Endothelial cell of umbilical vein (primary cell): ENCODE measurements at regions of chr6 and their contacts with region 1.

Region 1: DNA sequence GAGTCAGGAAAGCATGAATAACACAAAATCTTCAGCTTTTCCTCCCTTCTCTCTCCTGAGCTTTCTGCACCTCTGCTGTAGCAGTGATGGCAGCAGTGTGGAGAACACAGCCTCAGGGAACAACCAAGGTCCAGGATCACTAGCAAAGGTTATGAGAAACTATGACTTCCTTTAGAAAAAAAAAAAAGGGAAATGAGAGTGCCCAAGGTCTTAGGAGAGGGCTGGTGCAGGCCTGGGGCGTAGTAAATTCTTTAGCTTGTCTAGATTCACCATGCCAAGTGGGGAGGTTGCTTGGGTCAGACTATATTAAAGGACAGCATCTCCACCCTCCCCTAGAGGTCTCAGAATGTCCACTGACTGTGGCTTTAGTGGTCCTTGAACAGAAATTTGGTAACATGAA is 40.4 kb upstream of the POLR1H start:
- DNase-seq: no peak
- H3K4me3 ChIP-seq: no peak overlapping the region
- H3K27ac ChIP-seq: no peak overlapping the region
- H3K4me1 ChIP-seq: no peaks in the 10 kb centered on the region
- H3K27me3 ChIP-seq: no peaks in the 10 kb centered on the region
- CTCF ChIP-seq: no peak
- POLR2A ChIP-seq: no peak

Region 2: DNA sequence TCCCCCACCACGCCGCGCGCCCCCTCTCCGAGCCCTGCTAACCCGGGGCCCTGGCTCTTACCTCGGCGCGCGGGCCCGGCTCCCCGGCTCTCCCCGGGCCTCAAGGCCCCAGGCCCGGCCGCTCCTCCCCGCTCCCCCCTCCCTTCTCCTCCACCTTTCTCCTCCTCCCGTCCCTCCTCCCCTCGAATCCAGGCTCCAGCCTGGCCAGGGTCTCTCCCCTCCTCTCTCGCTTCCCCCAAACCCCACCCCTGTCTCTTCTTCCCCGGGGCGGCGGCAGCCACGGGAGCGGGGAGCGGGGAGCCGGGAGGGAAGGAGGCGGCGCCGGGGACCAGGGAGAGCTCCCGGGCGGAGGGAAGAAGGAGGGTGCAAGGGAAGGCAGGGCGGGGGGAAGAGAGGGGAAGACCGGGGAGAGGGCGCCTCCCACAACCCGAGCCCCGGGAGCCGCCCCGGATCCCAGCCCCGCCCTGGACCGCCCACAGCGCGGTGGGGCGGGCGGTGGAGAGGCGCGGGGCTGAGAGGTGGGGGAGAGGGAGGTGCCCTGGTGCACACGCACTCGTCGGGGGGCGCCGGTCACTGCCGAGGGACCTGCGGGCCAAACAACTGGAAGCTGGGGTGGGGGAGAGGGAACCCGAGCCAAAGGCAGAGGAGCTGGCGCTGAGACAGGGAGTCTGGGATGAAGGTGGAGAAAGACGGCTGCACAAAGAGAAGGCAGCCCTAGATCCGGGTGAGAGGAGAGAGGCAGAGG is 387.7 kb before region 1 on chr6 and contains the start of gene GABBR1:
- CTCF ChIA-PET with region 1: no interaction called
- POLR2A ChIA-PET with region 1: no interaction called
- dilution Hi-C with region 1: no loop called
- intact Hi-C with region 1: no loop called
- DNase-seq: peak; percentile 59
- H3K4me3 ChIP-seq: peak within 1 kb of the TSS; percentile 57 to 73 (median 62)
- H3K27ac ChIP-seq: no peak within 1 kb of the TSS
- H3K4me1 ChIP-seq: peaks cover 28% of the 10 kb centered on the region
- H3K27me3 ChIP-seq: no peaks in the 10 kb centered on the region
- CTCF ChIP-seq: no peak
- POLR2A ChIP-seq: no peak
- total RNA-seq, gene GABBR1: 50.8 and 52.1 TPM in 2 replicates

Region 3: GRCh38 chr6:30169658-30170614 is 149.3 kb after region 1 on chr6:
- CTCF ChIA-PET with region 1: interaction called, 4 read pairs
- POLR2A ChIA-PET with region 1: no interaction called
- dilution Hi-C with region 1: no loop called
- intact Hi-C with region 1: loop called (anchors 10 kb)
- DNase-seq: peak; percentile 66
- H3K4me3 ChIP-seq: no peak overlapping the region
- H3K27ac ChIP-seq: no peak overlapping the region
- H3K4me1 ChIP-seq: no peaks in the 10 kb centered on the region
- H3K27me3 ChIP-seq: peaks cover 51 to 74% of the 10 kb centered on the region in 2 experiments
- CTCF ChIP-seq: peak; percentile 57 to 74
- POLR2A ChIP-seq: no peak

Region 4: DNA sequence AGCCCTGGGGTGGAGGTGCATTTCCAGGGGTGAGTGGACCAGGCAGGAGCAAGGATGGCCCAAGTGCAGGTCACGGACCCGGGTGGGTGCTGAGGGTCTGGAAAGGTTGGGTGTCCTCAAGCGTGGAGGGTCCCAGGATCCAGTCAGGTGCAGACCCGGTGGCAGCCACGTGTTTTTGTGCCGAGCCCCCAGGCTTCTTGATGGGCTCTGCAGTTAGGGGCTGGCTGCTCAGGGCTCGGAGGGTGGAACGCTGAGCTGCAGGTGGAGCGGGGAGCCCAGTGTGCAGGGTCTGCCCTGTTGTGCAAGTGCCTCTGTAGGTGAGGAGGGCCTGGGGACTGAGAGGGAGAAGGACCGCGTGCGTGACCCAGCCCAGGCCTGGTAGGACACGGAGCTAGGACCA is 397.8 kb after region 1 on chr6:
- CTCF ChIA-PET with region 1: no interaction called
- POLR2A ChIA-PET with region 1: no interaction called
- dilution Hi-C with region 1: no loop called
- intact Hi-C with region 1: no loop called
- DNase-seq: no peak
- H3K4me3 ChIP-seq: no peak overlapping the region
- H3K27ac ChIP-seq: no peak overlapping the region
- H3K4me1 ChIP-seq: no peaks in the 10 kb centered on the region
- H3K27me3 ChIP-seq: peaks cover 17 to 25% of the 10 kb centered on the region in 2 experiments
- CTCF ChIP-seq: no peak
- POLR2A ChIP-seq: no peak